ENCODE measurements at regions of chr10 and their contacts with region 1.

Region 1: DNA sequence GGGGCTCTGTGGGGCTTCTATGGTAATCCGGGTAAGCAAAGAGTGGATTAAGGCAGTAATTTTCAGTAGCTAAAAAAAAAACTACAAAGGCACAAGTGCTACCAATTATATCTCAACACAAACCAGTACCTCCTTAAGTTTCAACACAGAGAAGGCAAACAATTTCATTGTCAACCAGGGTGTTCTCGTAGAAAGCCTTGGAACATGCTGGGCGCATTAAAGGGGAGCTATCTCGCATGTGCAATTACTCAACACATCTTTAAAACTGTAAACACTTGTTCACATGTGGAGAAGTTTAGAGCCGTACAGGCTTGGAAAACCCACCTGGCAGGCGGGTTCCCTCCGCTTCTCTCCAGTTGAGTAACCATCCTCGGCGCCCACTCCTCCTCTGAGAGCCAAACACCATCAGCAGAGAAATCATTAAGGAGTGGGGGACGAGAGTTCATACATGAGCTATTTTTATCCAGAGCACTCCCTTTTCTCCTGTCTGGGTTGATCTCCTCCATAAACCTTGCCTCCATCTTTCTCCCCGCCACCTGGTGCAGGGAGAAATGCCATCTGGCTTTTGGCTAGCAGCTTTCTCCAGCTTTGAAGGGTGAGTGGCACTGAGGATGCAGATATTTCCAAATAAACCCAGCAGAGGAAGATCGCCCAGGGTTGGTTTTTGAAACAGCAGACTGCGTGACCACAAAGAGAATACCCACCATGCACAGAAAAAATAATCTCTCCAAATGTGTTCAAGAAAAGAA is 287.1 kb downstream of the WDR11 start:
- DNase-seq: no peak
- H3K4me3 ChIP-seq: no peak overlapping the region
- H3K27ac ChIP-seq: peak overlapping the region in 3 of 4 donors; percentile 75 to 81 (median 79)
- H3K4me1 ChIP-seq: peaks cover 3 to 49% (median 35%) of the 10 kb centered on the region in 4 donors
- H3K27me3 ChIP-seq: no peaks in the 10 kb centered on the region
- CTCF ChIP-seq: no peak
- EP300 ChIP-seq: peak in 2 of 4 donors; percentile 15 to 80
- POLR2A ChIP-seq: no peak

Region 2: GRCh38 chr10:120917521-120918250 is 220.6 kb before region 1 on chr10:
- intact Hi-C with region 1: no loop called
- DNase-seq: no peak
- H3K4me3 ChIP-seq: no peak overlapping the region
- H3K27ac ChIP-seq: no peak overlapping the region
- H3K4me1 ChIP-seq: no peaks in the 10 kb centered on the region
- H3K27me3 ChIP-seq: no peaks in the 10 kb centered on the region
- CTCF ChIP-seq: no peak
- EP300 ChIP-seq: no peak
- POLR2A ChIP-seq: no peak

Region 3: GRCh38 chr10:120948889-120949608 is 189.2 kb before region 1 on chr10:
- intact Hi-C with region 1: no loop called
- DNase-seq: peak; percentile 82
- H3K4me3 ChIP-seq: peak overlapping the region; percentile 12 to 50 (median 38)
- H3K27ac ChIP-seq: peak overlapping the region in 1 of 4 donors; percentile 45
- H3K4me1 ChIP-seq: peaks cover 0 to 27% (median 23%) of the 10 kb centered on the region in 4 donors
- H3K27me3 ChIP-seq: peaks cover 0 to 12% (median 0%) of the 10 kb centered on the region in 3 donors
- CTCF ChIP-seq: peak; percentile 70 to 96 (median 83)
- EP300 ChIP-seq: no peak
- POLR2A ChIP-seq: no peak

Region 4: DNA sequence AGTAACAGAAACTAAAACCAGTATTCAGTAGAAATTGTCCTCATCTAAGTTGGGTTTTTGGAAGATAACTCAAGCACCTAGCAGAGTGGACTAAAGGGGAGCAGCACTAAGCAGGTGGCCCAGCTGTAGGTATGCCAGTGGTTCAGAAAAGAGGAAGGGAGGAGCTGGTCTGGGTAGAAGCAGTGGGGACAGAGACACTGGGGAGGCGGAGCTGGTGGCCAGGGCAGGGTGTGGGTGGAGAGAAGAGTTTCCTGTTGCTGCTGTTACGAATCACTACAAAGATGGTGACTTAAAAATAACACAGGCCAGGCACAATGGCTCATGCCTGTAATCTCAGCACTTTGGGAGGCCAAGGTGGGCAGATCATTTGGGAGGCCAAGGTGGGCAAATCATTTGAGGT is 150.9 kb before region 1 on chr10:
- intact Hi-C with region 1: no loop called
- DNase-seq: no peak
- H3K4me3 ChIP-seq: no peak overlapping the region
- H3K27ac ChIP-seq: no peak overlapping the region
- H3K4me1 ChIP-seq: no peaks in the 10 kb centered on the region
- H3K27me3 ChIP-seq: no peaks in the 10 kb centered on the region
- CTCF ChIP-seq: no peak
- EP300 ChIP-seq: no peak
- POLR2A ChIP-seq: no peak

Region 5: GRCh38 chr10:121033366-121033765 is 104.9 kb before region 1 on chr10:
- intact Hi-C with region 1: loop called (anchors 2 kb)
- DNase-seq: no peak
- H3K4me3 ChIP-seq: no peak overlapping the region
- H3K27ac ChIP-seq: peak overlapping the region in 3 of 4 donors; percentile 54 to 81 (median 80)
- H3K4me1 ChIP-seq: peaks cover 0 to 49% (median 36%) of the 10 kb centered on the region in 4 donors
- H3K27me3 ChIP-seq: no peaks in the 10 kb centered on the region
- CTCF ChIP-seq: no peak
- EP300 ChIP-seq: peak; percentile 67 to 91 (median 86)
- POLR2A ChIP-seq: no peak

Region 6: GRCh38 chr10:121296881-121297585 is 158.7 kb after region 1 on chr10:
- intact Hi-C with region 1: loop called (anchors 5 kb)
- DNase-seq: no peak
- H3K4me3 ChIP-seq: no peak overlapping the region
- H3K27ac ChIP-seq: peak overlapping the region in 2 of 4 donors; percentile 72 to 84
- H3K4me1 ChIP-seq: peaks cover 0 to 57% (median 40%) of the 10 kb centered on the region in 4 donors
- H3K27me3 ChIP-seq: no peaks in the 10 kb centered on the region
- CTCF ChIP-seq: no peak
- EP300 ChIP-seq: no peak
- POLR2A ChIP-seq: no peak

Region 7: DNA sequence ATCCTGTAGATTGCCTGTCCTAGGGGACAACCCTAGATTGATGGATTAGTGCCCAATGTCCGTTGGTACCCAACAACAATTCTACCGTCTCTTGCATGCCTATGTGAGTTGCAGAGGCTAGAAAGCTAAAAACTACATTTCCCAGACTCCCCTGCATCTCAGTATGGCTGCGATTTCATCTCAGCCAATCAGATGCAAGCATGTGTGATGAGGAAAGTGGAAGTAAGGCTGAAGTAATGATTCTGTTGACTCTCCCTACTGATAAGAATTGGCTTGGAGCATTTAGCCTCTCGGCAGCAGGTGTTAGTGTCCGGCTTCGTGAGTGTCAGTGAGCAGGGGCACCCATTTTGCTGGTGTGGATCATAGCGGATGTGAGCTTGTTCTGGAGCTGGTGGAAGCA is 288.0 kb after region 1 on chr10:
- intact Hi-C with region 1: loop called (anchors 5 kb)
- DNase-seq: no peak
- H3K4me3 ChIP-seq: no peak overlapping the region
- H3K27ac ChIP-seq: peak overlapping the region; percentile 38 to 82 (median 71)
- H3K4me1 ChIP-seq: peaks cover 0 to 41% (median 30%) of the 10 kb centered on the region in 4 donors
- H3K27me3 ChIP-seq: no peaks in the 10 kb centered on the region
- CTCF ChIP-seq: no peak
- EP300 ChIP-seq: no peak
- POLR2A ChIP-seq: no peak